Left ventricle myocardium inferior (tissue), 1 donor: ENCODE measurements at regions of chr1 and their contacts with region 1.

Region 1: DNA sequence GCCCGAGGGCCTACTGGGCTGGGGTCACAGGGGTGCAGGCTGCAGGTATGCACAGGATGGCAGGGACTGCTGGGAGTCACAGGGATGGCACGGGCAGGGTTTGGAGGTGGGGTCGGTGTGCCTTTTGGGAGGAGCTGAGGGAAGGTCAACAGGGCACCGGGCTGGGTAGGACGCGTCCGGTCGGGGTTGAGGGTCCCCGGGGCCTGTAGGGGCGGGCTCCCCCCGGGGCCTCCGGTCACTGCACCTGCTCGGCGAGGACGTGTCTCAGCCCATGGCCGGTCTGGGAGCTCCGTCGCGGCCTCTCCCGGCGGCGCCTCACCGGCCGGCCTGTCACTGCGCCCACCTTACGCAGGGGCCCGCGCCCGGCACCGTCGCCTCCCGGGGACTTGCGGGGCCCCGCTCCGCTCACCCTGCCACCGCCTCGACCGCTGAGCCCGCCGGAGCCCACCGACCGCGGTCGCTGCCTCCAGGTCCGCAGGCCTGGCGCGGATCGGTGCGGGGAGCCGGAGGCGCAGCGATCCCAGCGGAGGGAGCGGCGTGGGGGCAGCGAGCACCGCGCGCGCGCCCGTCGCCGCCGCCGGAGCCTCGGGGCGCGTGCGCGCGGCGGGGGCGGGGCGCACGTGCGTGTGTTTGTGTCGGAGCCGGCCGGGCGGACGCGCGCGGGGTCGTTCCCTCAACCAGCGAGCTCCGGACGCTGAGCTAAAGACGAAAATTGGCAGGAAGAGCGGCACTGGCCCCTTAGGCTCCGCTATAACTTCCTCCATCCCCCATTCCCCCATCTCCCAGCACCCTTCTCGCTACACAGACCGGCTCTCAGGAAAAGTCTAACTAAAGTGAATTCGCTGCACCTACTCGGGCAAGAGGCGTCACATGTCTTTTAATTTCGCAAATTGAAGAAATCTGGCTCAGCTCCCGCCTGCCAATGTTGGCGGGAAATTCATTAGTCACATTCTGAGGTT is at the start of gene AMIGO1:
- DNase-seq: peak; percentile 71
- H3K4me3 ChIP-seq: peak within 1 kb of the TSS; percentile 77
- H3K27ac ChIP-seq: peak within 1 kb of the TSS; percentile 75
- H3K4me1 ChIP-seq: peaks cover 34% of the 10 kb centered on the region
- H3K27me3 ChIP-seq: no peaks in the 10 kb centered on the region
- CTCF ChIP-seq: no peak
- total RNA-seq, gene AMIGO1: 19.4 TPM

Region 2: GRCh38 chr1:109277434-109278204 is 231.8 kb before region 1 on chr1:
- intact Hi-C with region 1: loop called (anchors 10 kb)
- DNase-seq: peak; percentile 78
- H3K4me3 ChIP-seq: no peak overlapping the region
- H3K27ac ChIP-seq: no peak overlapping the region
- H3K4me1 ChIP-seq: peaks cover 20% of the 10 kb centered on the region
- H3K27me3 ChIP-seq: no peaks in the 10 kb centered on the region
- CTCF ChIP-seq: peak; percentile 91

Region 3: GRCh38 chr1:109739738-109740660 is 230.5 kb after region 1 on chr1:
- intact Hi-C with region 1: no loop called
- DNase-seq: peak; percentile 86
- H3K4me3 ChIP-seq: peak overlapping the region; percentile 86
- H3K27ac ChIP-seq: peak overlapping the region; percentile 80
- H3K4me1 ChIP-seq: peaks cover 21% of the 10 kb centered on the region
- H3K27me3 ChIP-seq: no peaks in the 10 kb centered on the region
- CTCF ChIP-seq: no peak